ENCODE measurements at regions of chr5 and their contacts with region 1.

Region 1: GRCh38 chr5:135053278-135053677 is 19.2 kb upstream of the PITX1 start:
- DNase-seq: peak; percentile 53
- ATAC-seq: peak; percentile 95
- H3K4me3 Mint-ChIP-seq: peak overlapping the region; percentile 67
- H3K27ac Mint-ChIP-seq: peak overlapping the region; percentile 78
- H3K4me1 Mint-ChIP-seq: peaks cover 49% of the 10 kb centered on the region
- H3K27me3 Mint-ChIP-seq: peaks cover 41% of the 10 kb centered on the region
- CTCF ChIP-seq: no peak

Region 2: DNA sequence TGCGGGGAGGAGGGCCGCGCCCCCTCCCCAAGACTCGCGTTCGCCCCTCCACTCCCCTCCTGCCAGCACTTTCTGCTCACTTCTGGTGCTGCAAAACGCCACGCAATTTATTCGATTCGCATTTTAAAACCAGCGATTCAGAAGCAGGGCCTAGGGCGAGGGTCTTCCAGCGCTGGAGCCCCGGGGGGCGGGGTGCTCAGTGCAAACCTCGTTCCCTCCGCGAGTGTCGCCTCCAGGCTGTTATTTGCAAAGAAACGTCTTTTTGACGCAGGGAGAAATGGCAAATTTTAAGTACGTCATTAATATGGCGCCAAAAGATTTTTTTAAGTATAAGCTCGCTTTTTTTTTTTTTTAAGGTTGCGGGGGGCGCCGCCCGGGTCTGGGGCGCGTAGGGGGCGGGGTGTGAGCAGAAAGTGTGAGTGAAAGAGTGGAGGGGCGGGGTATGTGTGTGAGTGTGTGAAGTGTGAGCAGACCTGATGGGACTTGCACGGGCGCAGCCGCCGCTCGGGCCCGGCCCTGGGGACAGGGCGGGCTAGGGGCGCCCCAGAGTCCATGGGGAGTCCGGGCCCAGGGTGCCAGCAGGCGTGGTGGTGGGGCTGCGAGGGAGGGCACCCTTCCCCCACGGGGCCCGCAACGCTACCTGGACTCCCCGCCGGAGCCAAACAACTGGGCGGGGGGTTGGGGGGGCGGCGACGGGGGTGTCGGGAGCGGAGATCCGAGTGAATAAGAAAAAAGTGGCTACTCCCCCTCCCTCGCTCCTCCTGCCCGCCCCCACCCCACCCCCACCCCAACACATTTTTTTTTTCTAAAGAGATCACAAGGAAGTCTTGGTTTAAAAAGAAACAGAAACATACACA is 528.2 kb before region 1 on chr5 and contains the start of gene JADE2:
- CTCF ChIA-PET with region 1: no interaction called
- POLR2A ChIA-PET with region 1: no interaction called
- intact Hi-C with region 1: no loop called
- DNase-seq: peak; percentile 83
- ATAC-seq: peak; percentile 69
- H3K4me3 Mint-ChIP-seq: peak within 1 kb of the TSS; percentile 98
- H3K27ac Mint-ChIP-seq: peak within 1 kb of the TSS; percentile 97
- H3K4me1 Mint-ChIP-seq: peaks cover 42% of the 10 kb centered on the region
- H3K27me3 Mint-ChIP-seq: no peaks in the 10 kb centered on the region
- CTCF ChIP-seq: no peak
- total RNA-seq, gene JADE2: 218 and 225 TPM in 2 replicates

Region 3: DNA sequence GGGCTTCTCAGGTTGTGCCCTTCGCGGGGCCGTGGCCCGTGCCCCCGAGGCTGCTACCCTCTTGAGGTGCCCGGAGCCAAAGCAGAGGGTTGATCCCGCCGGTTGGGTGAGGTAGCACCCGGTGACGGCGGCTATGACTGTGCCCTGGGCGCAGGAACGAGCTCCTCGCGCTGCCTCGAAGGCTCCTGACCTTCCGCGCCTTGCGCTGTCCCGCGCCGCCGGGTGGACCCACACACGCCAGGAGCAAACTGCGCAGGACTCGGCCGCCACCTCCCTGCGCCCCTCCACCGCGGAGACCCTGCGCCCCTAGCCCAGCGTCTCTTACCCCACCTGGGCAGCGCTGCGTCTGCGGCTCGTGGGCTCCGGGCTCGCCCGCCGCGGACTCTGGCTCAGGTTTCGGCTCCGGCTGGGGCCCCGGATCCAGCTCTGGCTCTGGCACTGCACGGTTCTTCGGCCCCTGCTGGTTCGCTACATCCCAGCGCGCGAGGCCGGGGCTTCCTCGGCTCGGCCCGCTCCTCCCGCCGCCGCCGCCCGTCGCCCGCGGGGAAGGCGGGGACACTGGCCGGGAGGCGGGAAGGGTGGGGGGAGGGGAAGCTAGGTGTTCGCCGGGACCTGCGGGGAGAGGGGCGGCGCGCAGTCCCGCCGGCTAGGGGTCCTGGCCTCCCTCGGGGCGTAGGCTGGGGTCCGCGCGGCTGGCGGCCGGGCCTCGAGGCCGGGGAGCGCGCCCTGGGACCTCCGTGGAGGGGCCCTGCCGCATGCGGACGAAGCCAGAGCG is 13.8 kb before region 1 on chr5:
- CTCF ChIA-PET with region 1: interaction called, 3 read pairs
- POLR2A ChIA-PET with region 1: interaction called, 8 read pairs
- intact Hi-C with region 1: loop called (anchors 1 kb)
- DNase-seq: no peak
- ATAC-seq: peak; percentile 41
- H3K4me3 Mint-ChIP-seq: peak overlapping the region; percentile 15
- H3K27ac Mint-ChIP-seq: no peak overlapping the region
- H3K4me1 Mint-ChIP-seq: peaks cover 25% of the 10 kb centered on the region
- H3K27me3 Mint-ChIP-seq: peaks cover 59% of the 10 kb centered on the region
- CTCF ChIP-seq: no peak

Region 4: GRCh38 chr5:135398853-135399523 is 345.7 kb after region 1 on chr5 and contains the start of gene MACROH2A1:
- CTCF ChIA-PET with region 1: no interaction called
- POLR2A ChIA-PET with region 1: no interaction called
- intact Hi-C with region 1: loop called (anchors 10 kb)
- DNase-seq: peak; percentile 85
- ATAC-seq: peak; percentile 91
- H3K4me3 Mint-ChIP-seq: peak within 1 kb of the TSS; percentile 89
- H3K27ac Mint-ChIP-seq: peak within 1 kb of the TSS; percentile 89
- H3K4me1 Mint-ChIP-seq: peaks cover 53% of the 10 kb centered on the region
- H3K27me3 Mint-ChIP-seq: no peaks in the 10 kb centered on the region
- CTCF ChIP-seq: no peak
- total RNA-seq, gene MACROH2A1: 115 and 125 TPM in 2 replicates

Measured in activated B cell treated with CpG ODN at 0.5 μM for 24 hours (primary cell).